HCT116 (cell line): ENCODE measurements at regions of chr10 and their contacts with region 1.

Region 1: DNA sequence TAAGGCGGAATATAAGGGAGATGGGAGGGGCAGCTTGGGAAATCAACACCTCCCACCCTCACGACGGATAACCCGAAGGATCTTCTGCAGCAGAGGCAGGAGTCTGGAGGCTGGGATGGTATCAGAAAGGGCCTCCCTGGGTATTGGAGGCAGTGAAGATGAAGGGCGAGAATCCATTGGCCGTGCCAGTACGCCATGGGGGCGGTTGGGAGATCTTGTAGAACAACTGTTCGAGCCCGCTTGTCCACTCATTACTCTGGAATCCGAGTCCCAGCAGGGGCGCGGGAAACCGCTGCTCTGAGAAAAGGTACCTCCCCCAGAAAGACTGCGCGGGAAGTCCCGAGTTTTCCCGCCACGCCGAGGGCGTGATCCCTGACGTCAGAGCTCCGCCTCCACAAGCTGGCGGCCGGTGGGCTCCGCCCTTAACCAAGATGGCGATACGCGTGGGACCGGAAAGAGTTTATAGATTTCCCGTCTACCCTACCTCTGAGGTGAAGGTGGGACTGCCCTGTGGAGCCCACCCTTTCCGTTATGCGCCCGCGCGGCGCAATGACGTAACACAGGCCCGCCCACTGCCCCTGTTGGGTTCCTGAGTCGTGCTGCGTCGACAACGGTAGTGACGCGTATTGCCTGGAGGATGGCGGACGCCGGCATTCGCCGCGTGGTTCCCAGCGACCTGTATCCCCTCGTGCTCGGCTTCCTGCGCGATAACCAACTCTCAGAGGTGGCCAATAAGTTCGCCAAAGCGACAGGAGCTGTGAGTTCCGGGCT is at the start of gene NOLC1:
- DNase-seq: peak; percentile 100
- ATAC-seq: peak; percentile 87
- H3K4me3 ChIP-seq: peak within 1 kb of the TSS; percentile 89 to 97
- H3K27ac ChIP-seq: peak within 1 kb of the TSS; percentile 76
- H3K4me1 ChIP-seq: peaks cover 27 to 50% of the 10 kb centered on the region in 2 experiments
- H3K27me3 ChIP-seq: no peaks in the 10 kb centered on the region
- CTCF ChIP-seq: no peak
- POLR2A ChIP-seq: peak; percentile 96
- RAD21 ChIP-seq: no peak
- total RNA-seq, gene NOLC1: 231 TPM

Region 2: GRCh38 chr10:102064868-102065560 is 86.9 kb before region 1 on chr10 and contains the start of gene HPS6:
- CTCF ChIA-PET with region 1: no interaction called
- POLR2A ChIA-PET with region 1: no interaction called
- RAD21 ChIA-PET with region 1: no interaction called
- intact Hi-C with region 1: loop called (anchors 1 kb)
- DNase-seq: peak; percentile 77
- ATAC-seq: peak; percentile 97
- H3K4me3 ChIP-seq: peak within 1 kb of the TSS; percentile 77 to 89
- H3K27ac ChIP-seq: peak within 1 kb of the TSS; percentile 94
- H3K4me1 ChIP-seq: peaks cover 12 to 22% of the 10 kb centered on the region in 2 experiments
- H3K27me3 ChIP-seq: no peaks in the 10 kb centered on the region
- CTCF ChIP-seq: peak in 2 of 3 experiments; percentile 25 to 28; a peak in 2 of 6 replicates
- POLR2A ChIP-seq: peak; percentile 88
- RAD21 ChIP-seq: no peak
- total RNA-seq, gene HPS6: 31.7 TPM

Region 3: GRCh38 chr10:102132563-102133372 is 19.2 kb before region 1 on chr10 and contains the start of gene PPRC1:
- CTCF ChIA-PET with region 1: interaction called, 11 read pairs
- POLR2A ChIA-PET with region 1: interaction called, 9 read pairs
- RAD21 ChIA-PET with region 1: interaction called in 1 of 2 experiments, 3 read pairs
- intact Hi-C with region 1: loop called (anchors 1 kb)
- DNase-seq: peak; percentile 100
- ATAC-seq: peak; percentile 92
- H3K4me3 ChIP-seq: peak within 1 kb of the TSS; percentile 93
- H3K27ac ChIP-seq: peak within 1 kb of the TSS; percentile 98
- H3K4me1 ChIP-seq: peaks cover 27 to 41% of the 10 kb centered on the region in 2 experiments
- H3K27me3 ChIP-seq: no peaks in the 10 kb centered on the region
- CTCF ChIP-seq: peak in 2 of 3 experiments; percentile 96 to 99; a peak in 4 of 6 replicates
- POLR2A ChIP-seq: peak; percentile 74
- RAD21 ChIP-seq: no peak
- total RNA-seq, gene PPRC1: 93.0 TPM

Region 4: GRCh38 chr10:102358712-102359382 is 206.9 kb after region 1 on chr10:
- CTCF ChIA-PET with region 1: no interaction called
- POLR2A ChIA-PET with region 1: no interaction called
- RAD21 ChIA-PET with region 1: no interaction called
- intact Hi-C with region 1: no loop called
- DNase-seq: no peak
- ATAC-seq: no peak
- H3K4me3 ChIP-seq: no peak overlapping the region
- H3K27ac ChIP-seq: no peak overlapping the region
- H3K4me1 ChIP-seq: no peaks in the 10 kb centered on the region
- H3K27me3 ChIP-seq: no peaks in the 10 kb centered on the region
- CTCF ChIP-seq: no peak
- POLR2A ChIP-seq: no peak
- RAD21 ChIP-seq: no peak

Region 5: DNA sequence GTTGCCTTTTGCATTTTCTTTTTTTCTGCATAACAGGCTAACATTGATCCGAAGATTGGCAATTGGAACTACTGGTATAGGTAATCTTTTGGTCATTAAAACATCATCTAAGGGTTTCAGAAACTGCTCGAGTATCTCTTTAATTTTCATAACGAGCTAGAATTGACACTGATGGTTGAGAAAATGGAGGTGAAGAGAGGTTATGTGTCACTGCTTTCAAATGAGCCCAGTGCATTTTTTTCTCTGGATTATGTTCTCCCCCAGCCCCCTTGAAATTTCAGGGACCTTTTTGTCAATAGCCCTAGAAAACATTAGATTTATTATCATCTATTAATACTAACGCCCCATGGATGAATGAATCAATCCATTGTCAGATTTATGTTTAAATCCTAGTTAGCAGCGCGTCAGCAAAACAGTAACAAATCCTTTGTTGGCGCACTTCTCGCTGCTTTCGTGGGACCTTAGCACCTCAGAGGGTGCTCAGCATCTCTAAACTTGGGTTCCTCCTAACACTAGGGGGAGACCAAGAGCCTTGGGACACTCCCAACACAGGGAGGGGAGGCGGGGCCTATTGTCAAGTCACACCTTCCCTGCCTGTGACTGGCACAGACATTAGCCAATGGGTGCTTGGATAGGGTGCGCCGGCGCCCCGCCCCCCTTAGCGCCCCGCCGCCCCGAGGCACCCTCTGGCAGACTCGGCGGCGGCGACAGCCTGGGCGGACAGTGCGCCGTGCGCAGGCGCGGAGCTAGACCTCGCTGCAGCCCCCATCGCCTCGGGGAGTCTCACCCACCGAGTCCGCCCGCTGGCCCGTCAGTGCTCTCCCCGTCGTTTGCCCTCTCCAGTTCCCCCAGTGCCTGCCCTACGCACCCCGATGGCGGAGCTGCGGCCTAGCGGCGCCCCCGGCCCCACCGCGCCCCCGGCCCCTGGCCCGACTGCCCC is 351.6 kb after region 1 on chr10 and contains the start of gene SUFU:
- CTCF ChIA-PET with region 1: no interaction called
- POLR2A ChIA-PET with region 1: interaction called, 3 read pairs
- RAD21 ChIA-PET with region 1: no interaction called
- intact Hi-C with region 1: loop called (anchors 5 kb)
- DNase-seq: peak; percentile 100
- ATAC-seq: peak; percentile 72
- H3K4me3 ChIP-seq: peak within 1 kb of the TSS; percentile 83 to 89
- H3K27ac ChIP-seq: peak within 1 kb of the TSS; percentile 59
- H3K4me1 ChIP-seq: peaks cover 13 to 27% of the 10 kb centered on the region in 2 experiments
- H3K27me3 ChIP-seq: no peaks in the 10 kb centered on the region
- CTCF ChIP-seq: peak in 2 of 3 experiments; percentile 94 to 99; a peak in 4 of 6 replicates
- POLR2A ChIP-seq: peak; percentile 53
- RAD21 ChIP-seq: no peak
- total RNA-seq, gene SUFU: 18.8 TPM